ENCODE measurements at regions of chr6 and their contacts with region 1.

Region 1: DNA sequence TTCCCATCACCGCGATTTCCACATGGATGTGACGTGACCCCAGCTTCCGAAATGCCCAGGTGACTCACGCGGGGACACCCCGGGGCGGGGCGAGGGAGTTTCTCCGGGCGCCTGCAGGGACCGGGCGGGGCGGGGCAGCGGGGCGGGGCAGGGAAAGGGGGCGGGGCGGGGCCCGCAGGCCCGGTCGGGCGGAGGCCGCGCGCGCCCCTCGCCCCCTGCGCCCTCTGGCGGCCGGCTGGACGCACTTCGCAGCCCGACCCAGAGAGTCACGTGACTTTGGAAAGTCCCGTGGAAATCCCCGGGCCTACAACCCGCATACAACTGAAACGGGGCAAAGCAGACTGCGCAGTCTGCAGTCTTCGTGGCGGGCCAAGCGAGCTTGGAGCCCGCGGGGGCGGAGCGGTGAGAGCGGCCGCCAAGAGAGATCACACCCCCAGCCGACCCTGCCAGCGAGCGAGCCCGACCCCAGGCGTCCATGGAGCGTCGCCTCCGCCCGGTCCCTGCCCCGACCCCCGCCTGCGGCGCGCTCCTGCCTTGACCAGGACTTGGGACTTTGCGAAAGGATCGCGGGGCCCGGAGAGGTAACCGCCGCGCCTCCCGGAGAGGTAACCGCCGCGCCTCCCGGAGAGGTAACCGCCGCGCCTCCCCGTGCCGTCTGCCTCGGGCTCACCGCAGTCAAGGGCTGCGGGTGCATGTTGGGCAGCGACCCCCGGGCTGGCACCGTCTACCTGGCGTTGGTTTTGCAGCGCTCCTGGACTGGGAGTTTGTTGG is at the start of gene TNFAIP3:
- DNase-seq: peak; percentile 94 to 99 (median 98)
- ATAC-seq: peak; percentile 63
- H3K4me3 ChIP-seq: peak within 1 kb of the TSS; percentile 63
- H3K27ac ChIP-seq: peak within 1 kb of the TSS; percentile 96
- H3K4me1 ChIP-seq: peaks cover 34 to 66% of the 10 kb centered on the region in 2 experiments
- H3K27me3 ChIP-seq: no peaks in the 10 kb centered on the region
- CTCF ChIP-seq: peak; percentile 65 to 87 (median 82)
- EP300 ChIP-seq: no peak
- POLR2A ChIP-seq: no peak
- RAD21 ChIP-seq: peak; percentile 84 to 88
- polyA plus RNA-seq, gene TNFAIP3: 0.79 to 1.3 TPM

Region 2: GRCh38 chr6:137776786-137777686 is 90.1 kb before region 1 on chr6:
- CTCF ChIA-PET with region 1: no interaction called
- POLR2A ChIA-PET with region 1: no interaction called
- in situ Hi-C with region 1: no loop called
- intact Hi-C with region 1: no loop called
- DNase-seq: no peak
- ATAC-seq: 0 out of 3 replicates have a peak, but pooled peaks have one; percentile 18
- H3K4me3 ChIP-seq: no peak overlapping the region
- H3K27ac ChIP-seq: no peak overlapping the region
- H3K4me1 ChIP-seq: peaks cover 0 to 8% of the 10 kb centered on the region in 2 experiments; a peak in 1 of 5 replicates
- H3K27me3 ChIP-seq: no peaks in the 10 kb centered on the region
- CTCF ChIP-seq: no peak
- EP300 ChIP-seq: no peak
- POLR2A ChIP-seq: no peak
- RAD21 ChIP-seq: no peak

Region 3: DNA sequence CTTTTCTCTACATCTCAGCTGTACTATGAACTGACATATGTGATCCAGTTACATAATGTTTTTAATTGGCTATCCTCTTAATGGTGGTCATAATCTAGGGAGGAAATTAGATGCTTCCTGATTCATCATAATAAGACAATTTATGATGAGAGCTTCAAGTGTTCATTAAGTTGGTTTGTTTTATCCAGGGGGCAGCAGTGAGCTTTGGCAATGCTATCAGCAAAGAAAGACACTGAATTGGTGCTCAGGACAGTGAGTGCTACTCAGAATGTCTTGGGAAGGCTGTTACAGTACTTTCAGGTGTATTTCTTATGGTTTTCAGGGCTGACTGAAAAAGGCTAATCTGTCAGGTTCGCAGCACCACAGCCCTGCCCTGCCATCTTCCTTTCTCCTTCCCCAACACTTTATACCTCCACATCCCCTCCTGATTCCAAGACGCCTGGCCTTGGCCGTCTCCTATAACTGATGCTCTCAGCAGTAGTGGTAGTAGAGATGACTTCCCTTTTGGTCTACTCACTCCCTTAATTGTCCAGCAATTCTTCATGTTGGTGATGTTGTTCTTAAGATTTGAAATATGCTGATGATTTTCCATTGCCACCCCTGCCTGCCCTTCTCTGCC is 67.0 kb before region 1 on chr6:
- CTCF ChIA-PET with region 1: interaction called, 8 read pairs
- POLR2A ChIA-PET with region 1: interaction called, 7 read pairs
- in situ Hi-C with region 1: loop called (anchors 5 kb)
- intact Hi-C with region 1: loop called (anchors 1 kb)
- DNase-seq: peak; percentile 51 to 88 (median 60)
- ATAC-seq: peak; percentile 92
- H3K4me3 ChIP-seq: no peak overlapping the region
- H3K27ac ChIP-seq: no peak overlapping the region
- H3K4me1 ChIP-seq: peaks cover 0 to 6% of the 10 kb centered on the region in 2 experiments; a peak in 4 of 5 replicates
- H3K27me3 ChIP-seq: no peaks in the 10 kb centered on the region
- CTCF ChIP-seq: peak; percentile 79 to 93 (median 85)
- EP300 ChIP-seq: 0 out of 2 replicates have a peak, but pooled peaks have one; percentile 18
- POLR2A ChIP-seq: no peak
- RAD21 ChIP-seq: peak; percentile 97 to 98

Region 4: DNA sequence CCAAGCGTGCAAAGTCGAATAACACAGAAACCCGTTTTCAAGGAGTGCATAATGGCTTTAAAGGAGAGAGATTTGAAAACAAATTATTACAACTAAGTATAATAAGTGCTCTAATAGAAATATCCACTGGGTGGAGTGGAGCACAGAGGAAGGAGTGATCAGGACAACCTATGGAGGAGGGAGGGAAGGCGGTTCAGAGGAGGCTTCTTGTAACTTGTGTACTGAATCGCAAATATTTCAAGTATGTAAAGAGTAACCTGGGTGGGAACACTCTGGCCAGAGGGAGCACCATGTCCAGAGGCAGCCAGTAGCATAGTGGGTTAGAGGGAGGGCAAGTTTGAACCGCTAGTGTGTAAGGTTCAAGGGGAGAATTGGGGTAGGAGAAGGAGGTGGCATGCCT is 21.6 kb before region 1 on chr6:
- CTCF ChIA-PET with region 1: no interaction called
- POLR2A ChIA-PET with region 1: interaction called, 16 read pairs
- in situ Hi-C with region 1: no loop called
- intact Hi-C with region 1: loop called (anchors 1 kb)
- DNase-seq: peak; percentile 39 to 57 (median 50)
- ATAC-seq: peak; percentile 88
- H3K4me3 ChIP-seq: no peak overlapping the region
- H3K27ac ChIP-seq: no peak overlapping the region
- H3K4me1 ChIP-seq: peaks cover 2 to 18% of the 10 kb centered on the region in 2 experiments; a peak in 4 of 5 replicates
- H3K27me3 ChIP-seq: no peaks in the 10 kb centered on the region
- CTCF ChIP-seq: peak; percentile 30 to 63 (median 50); a peak in 3 of 6 replicates
- EP300 ChIP-seq: no peak
- POLR2A ChIP-seq: no peak
- RAD21 ChIP-seq: peak; percentile 21 to 64; a peak in 3 of 4 replicates

Region 5: DNA sequence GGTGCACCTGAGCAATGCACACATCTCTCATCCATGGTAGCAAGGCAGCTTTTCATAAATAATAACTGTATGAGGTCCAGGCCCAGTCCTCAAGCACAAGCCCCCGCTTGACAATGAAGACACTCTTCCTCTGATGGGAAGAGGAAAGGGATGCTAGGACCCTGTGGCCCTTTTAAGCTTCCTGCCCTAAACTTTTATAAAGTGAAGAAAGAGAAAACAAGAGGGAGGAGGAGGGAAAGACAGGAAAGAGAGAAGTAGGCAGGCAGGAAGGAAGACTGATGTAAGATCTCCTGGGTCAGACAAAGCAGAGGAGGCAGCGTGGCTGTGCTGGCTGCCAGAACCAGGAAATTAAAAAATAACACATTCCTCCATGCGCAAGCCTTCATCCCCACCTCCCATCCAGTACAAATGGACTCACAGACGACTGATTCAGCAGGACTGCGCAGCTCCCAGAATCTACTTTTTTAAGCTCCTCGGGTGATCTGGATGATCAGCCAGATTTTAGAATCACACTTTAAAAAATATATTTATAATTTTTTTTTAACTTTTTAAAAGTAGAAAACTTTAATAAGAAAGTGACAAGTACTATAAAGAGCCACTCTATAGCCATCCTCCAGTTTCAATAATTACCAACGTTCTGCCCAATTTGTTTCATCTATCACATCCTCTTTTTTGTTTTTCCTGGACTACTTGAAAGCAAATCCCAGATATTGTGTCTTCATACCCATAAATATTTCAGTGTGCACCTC is 16.5 kb after region 1 on chr6:
- CTCF ChIA-PET with region 1: no interaction called
- POLR2A ChIA-PET with region 1: interaction called, 61 read pairs
- in situ Hi-C with region 1: no loop called
- intact Hi-C with region 1: no loop called
- DNase-seq: no peak
- ATAC-seq: peak; percentile 75
- H3K4me3 ChIP-seq: no peak overlapping the region
- H3K27ac ChIP-seq: no peak overlapping the region
- H3K4me1 ChIP-seq: peaks cover 0 to 5% of the 10 kb centered on the region in 2 experiments; a peak in 3 of 5 replicates
- H3K27me3 ChIP-seq: no peaks in the 10 kb centered on the region
- CTCF ChIP-seq: no peak
- EP300 ChIP-seq: no peak
- POLR2A ChIP-seq: 0 out of 2 replicates have a peak, but pooled peaks have one; percentile 26
- RAD21 ChIP-seq: peak in 1 of 2 experiments; percentile 4; a peak in 1 of 4 replicates

Region 6: DNA sequence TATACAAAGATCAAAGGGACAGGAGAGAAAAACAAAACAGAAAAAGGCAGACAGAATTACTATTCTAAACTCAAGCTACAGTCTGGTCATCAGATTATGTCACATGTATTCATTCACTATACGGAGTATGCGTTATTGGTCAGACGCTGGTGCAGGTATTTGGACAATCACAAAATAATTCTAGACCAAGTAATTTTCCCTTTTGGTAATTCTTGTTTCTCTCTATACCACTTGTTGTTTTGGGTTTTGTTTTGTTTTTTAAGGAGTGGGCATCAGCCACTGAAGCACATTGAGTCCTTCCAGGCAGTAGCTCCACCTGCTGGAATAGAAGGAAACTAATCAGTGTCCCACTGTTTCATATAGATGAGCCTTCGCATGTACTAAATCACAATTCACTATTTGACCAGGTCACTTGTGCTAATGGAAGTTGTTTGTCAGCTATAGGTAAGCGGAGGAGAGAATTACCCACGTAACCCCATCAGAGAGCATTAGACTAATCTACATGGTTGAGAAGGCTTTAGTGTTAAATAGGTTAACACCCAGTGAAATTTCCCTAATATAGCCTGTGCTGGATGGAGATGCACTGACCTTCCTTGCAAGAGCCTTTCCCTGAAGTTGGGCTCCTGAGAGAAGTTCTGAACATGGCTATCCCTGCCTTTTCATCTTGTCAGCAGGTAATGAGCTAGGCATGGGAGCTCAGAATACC is 77.8 kb after region 1 on chr6:
- CTCF ChIA-PET with region 1: no interaction called
- POLR2A ChIA-PET with region 1: interaction called, 3 read pairs
- in situ Hi-C with region 1: loop called (anchors 5 kb)
- intact Hi-C with region 1: loop called (anchors 1 kb)
- DNase-seq: peak; percentile 52 to 67 (median 56)
- ATAC-seq: peak; percentile 92
- H3K4me3 ChIP-seq: no peak overlapping the region
- H3K27ac ChIP-seq: no peak overlapping the region
- H3K4me1 ChIP-seq: peaks cover 0 to 7% of the 10 kb centered on the region in 2 experiments; a peak in 2 of 5 replicates
- H3K27me3 ChIP-seq: no peaks in the 10 kb centered on the region
- CTCF ChIP-seq: peak; percentile 82 to 92 (median 84)
- EP300 ChIP-seq: no peak
- POLR2A ChIP-seq: no peak
- RAD21 ChIP-seq: peak; percentile 93 to 96

Region 7: DNA sequence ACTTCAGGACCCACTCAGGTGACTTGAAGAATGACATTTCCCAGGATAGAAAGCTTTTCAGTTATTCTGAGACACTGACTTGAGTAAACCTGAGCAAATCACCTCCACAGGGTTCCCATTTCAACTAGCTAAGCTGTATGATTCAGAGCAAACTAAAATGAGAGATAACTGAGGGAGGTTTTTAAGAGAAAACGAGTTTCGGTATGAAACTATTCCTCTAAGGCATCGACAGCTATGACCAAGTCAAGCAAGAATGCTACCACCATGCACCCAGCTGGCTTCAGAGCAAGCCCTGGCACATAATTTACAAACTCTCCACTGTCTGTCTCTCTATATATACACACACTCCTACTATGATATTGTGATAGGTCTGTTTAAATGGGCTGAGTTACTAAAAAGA is 164.8 kb after region 1 on chr6:
- CTCF ChIA-PET with region 1: no interaction called
- POLR2A ChIA-PET with region 1: no interaction called
- in situ Hi-C with region 1: no loop called
- intact Hi-C with region 1: no loop called
- DNase-seq: no peak
- ATAC-seq: no peak
- H3K4me3 ChIP-seq: no peak overlapping the region
- H3K27ac ChIP-seq: no peak overlapping the region
- H3K4me1 ChIP-seq: no peaks in the 10 kb centered on the region
- H3K27me3 ChIP-seq: peaks cover 14 to 42% of the 10 kb centered on the region in 2 experiments
- CTCF ChIP-seq: no peak
- EP300 ChIP-seq: no peak
- POLR2A ChIP-seq: no peak
- RAD21 ChIP-seq: no peak

Region 8: DNA sequence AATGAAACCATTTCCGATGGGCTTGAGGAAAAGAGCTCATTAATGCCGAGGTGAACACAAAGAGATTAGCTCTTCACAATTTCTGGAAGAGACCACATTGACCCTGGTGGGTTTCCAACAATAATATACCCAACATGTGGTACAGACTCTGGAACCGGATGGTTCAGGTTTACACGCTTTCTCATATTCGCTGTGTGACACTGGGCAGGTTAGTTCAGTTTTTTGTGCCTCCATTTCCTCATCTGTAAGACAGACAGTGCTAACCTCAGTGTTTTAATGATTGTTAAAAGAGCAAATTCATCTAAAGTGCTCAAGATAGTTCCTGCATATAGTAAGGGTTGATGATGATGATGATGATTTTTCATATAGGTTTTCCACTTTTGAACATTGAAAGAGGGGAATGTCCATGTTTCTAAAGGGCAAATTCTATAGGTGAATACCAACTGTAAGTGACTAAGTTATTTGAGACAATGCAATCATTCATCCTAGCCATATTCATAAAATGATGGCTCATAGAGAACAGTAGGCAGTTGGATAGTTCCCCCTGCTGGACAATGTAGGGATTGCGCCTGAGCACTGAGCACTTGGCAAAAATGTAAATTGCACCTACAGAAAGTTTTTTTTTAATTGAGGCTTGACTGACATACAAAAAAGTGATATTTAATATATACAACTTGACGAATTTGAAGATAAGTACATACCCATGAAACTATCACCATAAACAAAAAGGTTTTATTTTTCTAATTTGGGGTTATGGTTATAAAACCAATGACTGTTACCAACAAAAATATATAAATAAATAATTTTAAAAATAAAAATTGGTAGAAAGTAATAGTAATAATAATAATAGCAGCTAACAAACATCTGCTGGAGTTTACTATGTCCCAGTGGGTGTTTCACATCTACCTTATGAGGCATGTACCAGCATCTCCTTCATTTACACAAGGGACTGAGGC is 242.2 kb after region 1 on chr6:
- CTCF ChIA-PET with region 1: no interaction called
- POLR2A ChIA-PET with region 1: no interaction called
- in situ Hi-C with region 1: no loop called
- intact Hi-C with region 1: loop called (anchors 5 kb)
- DNase-seq: peak; percentile 61 to 78 (median 64)
- ATAC-seq: peak; percentile 44; the same call in 2 of the 3 replicates
- H3K4me3 ChIP-seq: no peak overlapping the region
- H3K27ac ChIP-seq: no peak overlapping the region
- H3K4me1 ChIP-seq: peaks cover 0 to 12% of the 10 kb centered on the region in 2 experiments; a peak in 2 of 5 replicates
- H3K27me3 ChIP-seq: peaks cover 34 to 39% of the 10 kb centered on the region in 2 experiments
- CTCF ChIP-seq: peak; percentile 77 to 97 (median 93)
- EP300 ChIP-seq: no peak
- POLR2A ChIP-seq: no peak
- RAD21 ChIP-seq: peak; percentile 88 to 91